ENCODE measurements at regions of chr3 and their contacts with region 1.

Region 1: GRCh38 chr3:134449277-134449676 is 36.5 kb downstream of the ANAPC13 start:
- DNase-seq: peak; percentile 45
- H3K4me3 ChIP-seq: no peak overlapping the region
- H3K27ac ChIP-seq: no peak overlapping the region
- H3K4me1 ChIP-seq: peaks cover 26% of the 10 kb centered on the region
- H3K27me3 ChIP-seq: no peaks in the 10 kb centered on the region
- CTCF ChIP-seq: peak; percentile 73 to 84

Region 2: DNA sequence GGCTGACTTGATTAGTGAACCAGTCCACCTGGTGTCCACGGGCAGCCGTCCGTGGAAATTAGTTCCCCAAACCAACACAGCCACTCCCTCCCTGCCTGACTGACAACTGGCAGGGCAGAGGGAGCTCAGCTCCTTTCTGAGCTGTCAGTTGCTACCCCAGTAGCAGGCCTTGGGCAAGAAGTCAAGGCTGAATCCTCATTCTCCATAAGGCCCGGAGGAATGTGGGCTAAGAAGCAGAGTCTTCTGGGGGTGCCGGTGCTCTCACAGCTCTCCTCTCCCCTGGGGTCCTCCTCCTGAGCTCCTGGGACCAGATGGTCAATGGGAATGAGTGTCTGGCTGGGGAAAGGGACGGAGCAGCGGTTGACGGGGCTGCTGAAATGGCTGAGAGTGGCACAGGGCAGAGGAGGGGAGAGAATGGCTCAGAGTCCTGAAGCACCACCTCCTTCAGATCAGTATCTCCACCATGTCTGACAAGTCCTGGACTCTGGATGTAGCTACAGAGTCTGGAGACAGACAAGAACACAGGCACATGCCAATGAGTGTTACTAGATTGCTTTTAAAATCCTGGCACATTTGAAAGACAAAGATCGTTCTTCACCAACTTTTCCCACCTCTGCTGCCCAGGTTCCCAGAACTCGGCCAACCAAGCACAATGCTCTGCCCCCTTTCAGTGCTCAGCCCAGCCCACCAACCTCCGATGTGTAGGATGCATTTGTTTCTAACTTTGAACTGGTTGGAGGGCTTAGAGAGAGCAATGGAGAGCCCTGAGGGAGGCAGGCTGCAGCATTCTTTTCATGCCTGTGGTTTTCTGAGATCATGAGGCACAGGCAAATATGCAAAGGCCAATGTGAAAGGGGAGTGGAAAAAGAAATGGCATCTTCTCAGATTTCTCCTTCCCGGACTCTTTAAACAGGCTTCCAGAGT is 91.8 kb before region 1 on chr3:
- CTCF ChIA-PET with region 1: no interaction called
- dilution Hi-C with region 1: no loop called
- in situ Hi-C with region 1: no loop called
- intact Hi-C with region 1: loop called (anchors 1 kb)
- DNase-seq: peak; percentile 82
- H3K4me3 ChIP-seq: no peak overlapping the region
- H3K27ac ChIP-seq: peak overlapping the region; percentile 43
- H3K4me1 ChIP-seq: peaks cover 70% of the 10 kb centered on the region
- H3K27me3 ChIP-seq: no peaks in the 10 kb centered on the region
- CTCF ChIP-seq: no peak

Measured in mammary epithelial cell (primary cell).